CD8-positive, alpha-beta memory T cell (primary cell): ENCODE measurements at regions of chr14 and their contacts with region 1.

Region 1: GRCh38 chr14:75487155-75487671 is 35.1 kb upstream of the BATF start:
- DNase-seq: peak in 1 of 5 donors; percentile 22
- H3K4me3 ChIP-seq: no peak overlapping the region
- H3K4me3 Mint-ChIP-seq: peak overlapping the region in 6 of 7 donors; percentile 4 to 65 (median 20)
- H3K27ac ChIP-seq: no peak overlapping the region
- H3K27ac Mint-ChIP-seq: peak overlapping the region in 5 of 8 donors; percentile 24 to 70 (median 36)
- H3K4me1 ChIP-seq: peaks cover 7% of the 10 kb centered on the region
- H3K4me1 Mint-ChIP-seq: peaks cover 12 to 24% (median 22%) of the 10 kb centered on the region in 3 donors
- H3K27me3 ChIP-seq: no peaks in the 10 kb centered on the region
- H3K27me3 Mint-ChIP-seq: peaks cover 0 to 1% of the 10 kb centered on the region in 2 donors

Region 2: DNA sequence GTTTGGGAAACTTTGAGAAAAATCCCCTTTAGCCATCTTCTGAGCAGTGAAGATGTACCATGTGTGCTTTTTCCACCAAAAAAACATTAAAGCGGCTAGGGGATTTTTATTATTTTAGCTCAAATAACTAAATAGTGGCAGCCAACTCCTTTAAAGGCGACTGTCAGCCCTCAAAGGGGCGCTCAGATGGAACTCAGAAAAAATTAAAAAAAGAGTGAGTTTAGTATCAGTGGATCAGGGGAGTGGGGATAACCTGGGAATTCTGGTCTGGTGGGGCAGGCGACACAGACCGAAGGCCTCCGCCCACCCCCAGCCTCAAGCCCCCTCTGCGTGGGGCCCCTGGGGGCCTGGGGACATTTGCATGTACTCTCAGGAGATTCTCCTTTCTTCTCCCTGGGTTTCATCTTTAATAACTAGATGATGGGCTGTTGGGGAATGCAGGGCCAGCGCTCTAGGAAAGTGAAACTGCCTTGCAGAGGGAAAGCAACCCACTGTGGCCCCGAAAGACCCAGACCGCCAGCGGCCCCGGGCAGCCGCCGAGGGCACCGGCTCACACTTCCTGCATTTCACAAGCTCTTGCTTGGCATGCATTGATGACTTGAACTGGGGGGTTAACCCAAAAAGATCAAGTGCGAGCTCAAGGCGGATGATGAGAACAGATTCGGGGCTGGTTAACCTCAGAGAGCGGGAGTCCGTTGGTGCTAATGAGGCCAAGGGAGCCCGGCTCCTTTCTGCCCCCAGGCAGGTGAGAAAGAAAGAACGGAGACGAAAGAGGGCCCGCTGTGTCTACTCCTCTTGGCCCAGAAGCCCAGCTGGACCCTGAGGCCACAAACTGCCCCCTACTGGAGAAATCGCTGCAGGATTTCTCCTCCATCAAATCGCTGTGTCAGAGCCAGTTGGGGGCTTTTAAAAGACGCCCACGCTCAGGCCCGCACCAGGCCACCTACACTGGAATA is 27.7 kb after region 1 on chr14:
- CTCF ChIA-PET with region 1: interaction called, 25 read pairs
- POLR2A ChIA-PET with region 1: interaction called, 5 read pairs
- DNase-seq: peak; percentile 33 to 77 (median 52)
- H3K4me3 ChIP-seq: peak overlapping the region; percentile 45
- H3K4me3 Mint-ChIP-seq: peak overlapping the region; percentile 83 to 99 (median 87)
- H3K27ac ChIP-seq: peak overlapping the region; percentile 62
- H3K27ac Mint-ChIP-seq: peak overlapping the region; percentile 92 to 100 (median 97)
- H3K4me1 ChIP-seq: peaks cover 28% of the 10 kb centered on the region
- H3K4me1 Mint-ChIP-seq: peaks cover 36 to 52% (median 49%) of the 10 kb centered on the region in 3 donors
- H3K27me3 ChIP-seq: no peaks in the 10 kb centered on the region
- H3K27me3 Mint-ChIP-seq: no peaks in the 10 kb centered on the region

Region 3: GRCh38 chr14:75522224-75522982 is 35.2 kb after region 1 on chr14 and contains the start of gene BATF:
- CTCF ChIA-PET with region 1: interaction called, 10 read pairs
- POLR2A ChIA-PET with region 1: no interaction called
- DNase-seq: peak; percentile 52 to 84 (median 72)
- H3K4me3 ChIP-seq: peak within 1 kb of the TSS; percentile 91
- H3K4me3 Mint-ChIP-seq: peak within 1 kb of the TSS; percentile 96 to 100 (median 99)
- H3K27ac ChIP-seq: peak within 1 kb of the TSS; percentile 66
- H3K27ac Mint-ChIP-seq: peak within 1 kb of the TSS; percentile 93 to 99 (median 97)
- H3K4me1 ChIP-seq: peaks cover 60% of the 10 kb centered on the region
- H3K4me1 Mint-ChIP-seq: peaks cover 65 to 82% (median 77%) of the 10 kb centered on the region in 3 donors
- H3K27me3 ChIP-seq: no peaks in the 10 kb centered on the region
- H3K27me3 Mint-ChIP-seq: no peaks in the 10 kb centered on the region
- total RNA-seq, gene BATF: 165 to 172 TPM